ENCODE measurements at regions of chr9 and their contacts with region 1.

Region 1: GRCh38 chr9:104863180-104863883 is 64.6 kb downstream of the ABCA1 start:
- DNase-seq: peak; percentile 46
- H3K4me3 ChIP-seq: no peak overlapping the region
- H3K27me3 ChIP-seq: no peaks in the 10 kb centered on the region
- CTCF ChIP-seq: peak; percentile 89

Region 2: DNA sequence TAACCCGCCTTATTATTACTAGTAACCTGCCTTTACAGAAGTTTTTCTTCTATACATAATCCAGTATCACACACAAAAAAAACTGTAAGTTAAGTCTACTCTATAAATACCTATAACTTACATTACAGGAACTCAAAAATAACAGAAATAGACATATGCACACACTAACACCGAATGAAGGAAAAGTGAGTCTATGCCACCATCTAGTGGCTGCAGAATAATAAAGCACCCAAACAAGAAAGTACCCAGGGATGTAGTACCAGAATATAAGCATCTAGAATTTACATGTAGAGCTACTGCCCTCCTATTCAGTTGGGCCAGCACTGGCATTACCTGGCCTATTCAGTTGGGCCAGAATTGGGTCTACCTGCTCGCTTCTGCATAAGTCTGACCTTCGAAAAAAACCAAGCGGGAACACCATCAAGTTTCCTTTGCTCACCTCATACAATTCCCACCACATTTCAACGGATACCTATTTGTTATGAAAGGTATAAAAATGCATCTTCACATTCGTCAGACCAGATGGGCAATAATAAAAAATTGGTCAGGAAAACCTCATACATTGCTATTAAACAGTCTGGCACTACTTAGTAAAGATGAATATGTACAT is 119.9 kb before region 1 on chr9:
- CTCF ChIA-PET with region 1: no interaction called
- POLR2A ChIA-PET with region 1: no interaction called
- DNase-seq: peak; percentile 19
- H3K4me3 ChIP-seq: no peak overlapping the region
- H3K27me3 ChIP-seq: no peaks in the 10 kb centered on the region
- CTCF ChIP-seq: peak; percentile 62

Region 3: DNA sequence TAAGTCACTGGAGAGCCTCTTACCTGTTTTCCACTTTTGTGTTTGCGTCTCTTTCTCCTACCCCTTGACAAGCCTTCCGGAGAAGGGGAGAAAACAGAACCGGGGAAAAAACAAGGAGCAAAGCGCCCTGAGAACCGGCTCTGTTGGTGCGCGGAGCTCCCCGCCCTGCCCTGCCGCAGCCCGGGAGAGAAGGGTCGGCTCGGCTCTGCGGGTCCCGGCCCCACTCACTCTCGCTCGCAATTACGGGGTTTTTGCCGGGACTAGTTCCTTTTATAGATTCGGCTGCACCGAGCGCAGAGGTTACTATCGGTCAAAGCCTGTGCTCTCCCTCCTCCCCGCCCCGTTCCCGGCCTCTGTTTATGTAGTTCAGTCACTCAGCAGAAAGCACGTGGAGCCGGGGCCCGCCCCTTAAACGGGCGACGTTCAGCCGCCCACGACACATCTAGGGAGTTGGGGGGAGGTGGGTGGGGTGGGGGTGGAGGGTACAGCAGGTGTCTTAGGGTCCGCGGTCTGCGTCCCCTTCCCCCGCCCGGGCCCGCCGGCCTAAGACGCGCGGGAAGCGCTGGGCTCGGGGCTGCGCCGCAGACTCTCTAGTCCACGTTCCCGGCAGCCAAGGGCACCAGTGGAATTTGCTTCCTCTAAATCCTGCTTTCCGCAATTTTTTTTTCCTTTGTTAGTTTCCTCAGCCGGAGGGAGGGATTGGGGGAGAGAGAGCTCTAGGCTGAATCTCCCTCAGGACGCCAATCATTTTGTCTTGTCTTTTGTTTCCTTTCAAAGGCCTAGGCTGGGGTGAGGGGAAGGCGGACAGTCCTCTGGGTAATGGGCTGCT is 64.8 kb after region 1 on chr9 and contains the start of gene ABCA1:
- CTCF ChIA-PET with region 1: interaction called, 75 read pairs
- POLR2A ChIA-PET with region 1: no interaction called
- DNase-seq: no peak
- H3K4me3 ChIP-seq: peak within 1 kb of the TSS; percentile 73
- H3K27me3 ChIP-seq: no peaks in the 10 kb centered on the region
- CTCF ChIP-seq: no peak
- polyA plus RNA-seq, gene ABCA1: 27.4 and 36.2 TPM in 2 replicates

Region 4: GRCh38 chr9:105132576-105132975 is 269.2 kb after region 1 on chr9:
- CTCF ChIA-PET with region 1: interaction called, 15 read pairs
- POLR2A ChIA-PET with region 1: no interaction called
- DNase-seq: peak; percentile 85
- H3K4me3 ChIP-seq: no peak overlapping the region
- H3K27me3 ChIP-seq: no peaks in the 10 kb centered on the region
- CTCF ChIP-seq: no peak

Region 5: GRCh38 chr9:105157130-105157583 is 293.8 kb after region 1 on chr9:
- CTCF ChIA-PET with region 1: interaction called, 20 read pairs
- POLR2A ChIA-PET with region 1: no interaction called
- DNase-seq: peak; percentile 44
- H3K4me3 ChIP-seq: no peak overlapping the region
- H3K27me3 ChIP-seq: no peaks in the 10 kb centered on the region
- CTCF ChIP-seq: peak; percentile 48

Region 6: DNA sequence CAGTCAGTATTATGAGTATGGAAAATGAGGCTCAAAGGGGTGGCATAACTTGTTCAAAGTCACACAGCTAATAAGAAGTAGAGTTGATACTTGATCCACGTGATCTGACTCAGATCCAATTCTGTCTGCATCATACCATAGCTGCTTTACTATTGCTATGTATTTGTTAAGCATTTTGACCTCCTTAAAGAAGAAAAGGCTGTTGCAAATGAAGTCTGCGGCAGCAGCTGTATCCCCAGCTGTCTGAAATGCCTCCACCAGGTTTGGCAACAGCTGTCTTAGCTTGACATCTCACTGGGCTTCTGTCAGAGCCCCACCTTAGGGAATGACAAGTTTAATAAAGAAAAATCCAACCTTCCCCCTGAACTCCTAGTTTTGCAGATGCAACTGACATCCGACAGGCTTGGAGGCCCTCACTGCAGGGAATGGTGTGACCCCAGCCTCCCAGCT is 305.6 kb after region 1 on chr9:
- CTCF ChIA-PET with region 1: interaction called, 10 read pairs
- POLR2A ChIA-PET with region 1: no interaction called
- DNase-seq: no peak
- H3K4me3 ChIP-seq: no peak overlapping the region
- H3K27me3 ChIP-seq: no peaks in the 10 kb centered on the region
- CTCF ChIP-seq: no peak